ENCODE measurements at regions of chr1 and their contacts with region 1.

Region 1: DNA sequence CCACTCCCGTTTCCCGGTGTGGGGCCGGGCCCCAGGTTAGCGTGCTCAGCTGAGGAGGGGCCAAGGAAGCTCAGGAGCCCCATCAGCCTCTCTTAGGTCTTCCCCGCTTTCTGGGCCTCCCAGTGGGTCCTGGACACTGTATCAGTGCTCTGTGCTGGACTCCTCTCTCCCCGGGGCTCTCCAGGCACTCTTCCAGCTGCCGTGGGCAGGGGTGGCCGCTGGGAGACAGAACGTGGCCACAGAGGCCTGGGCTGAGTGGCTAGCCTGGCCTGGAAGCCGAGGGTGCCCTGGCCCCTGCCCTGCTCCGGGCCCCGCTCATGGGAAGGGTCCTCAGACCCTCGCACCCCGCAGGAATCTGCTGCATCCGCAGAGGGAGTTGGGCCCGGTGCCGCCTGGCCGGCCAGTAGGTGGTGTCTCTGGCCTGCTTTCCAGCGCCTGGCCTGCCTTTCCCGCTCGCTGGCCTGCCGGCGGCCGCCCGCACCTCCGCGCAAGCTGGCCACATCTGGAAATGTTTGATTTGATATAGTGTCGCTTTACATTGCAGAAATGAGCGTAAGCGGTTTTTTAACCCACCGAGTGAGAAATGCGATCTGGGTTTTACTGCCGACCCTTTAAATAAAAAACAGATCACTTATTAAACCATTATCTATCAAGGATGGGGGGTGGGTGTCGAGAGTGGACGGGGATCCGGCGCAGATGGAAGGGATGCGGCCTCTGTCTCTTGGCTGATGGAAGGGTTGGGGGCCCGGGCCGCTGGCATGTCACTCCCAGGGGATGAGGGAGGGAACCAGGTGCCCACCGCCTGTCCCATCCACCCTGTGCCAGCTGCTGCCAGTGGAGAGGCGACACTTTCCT is 74.4 kb upstream of the TTC34 start:
- DNase-seq: no peak
- H3K4me3 ChIP-seq: peak overlapping the region in 1 of 2 donors; percentile 52
- H3K27ac ChIP-seq: peak overlapping the region in 1 of 2 donors; percentile 60
- H3K4me1 ChIP-seq: peaks cover 0 to 12% of the 10 kb centered on the region in 2 donors
- H3K27me3 ChIP-seq: no peaks in the 10 kb centered on the region
- CTCF ChIP-seq: peak; percentile 73 to 84 (median 84)

Region 2: DNA sequence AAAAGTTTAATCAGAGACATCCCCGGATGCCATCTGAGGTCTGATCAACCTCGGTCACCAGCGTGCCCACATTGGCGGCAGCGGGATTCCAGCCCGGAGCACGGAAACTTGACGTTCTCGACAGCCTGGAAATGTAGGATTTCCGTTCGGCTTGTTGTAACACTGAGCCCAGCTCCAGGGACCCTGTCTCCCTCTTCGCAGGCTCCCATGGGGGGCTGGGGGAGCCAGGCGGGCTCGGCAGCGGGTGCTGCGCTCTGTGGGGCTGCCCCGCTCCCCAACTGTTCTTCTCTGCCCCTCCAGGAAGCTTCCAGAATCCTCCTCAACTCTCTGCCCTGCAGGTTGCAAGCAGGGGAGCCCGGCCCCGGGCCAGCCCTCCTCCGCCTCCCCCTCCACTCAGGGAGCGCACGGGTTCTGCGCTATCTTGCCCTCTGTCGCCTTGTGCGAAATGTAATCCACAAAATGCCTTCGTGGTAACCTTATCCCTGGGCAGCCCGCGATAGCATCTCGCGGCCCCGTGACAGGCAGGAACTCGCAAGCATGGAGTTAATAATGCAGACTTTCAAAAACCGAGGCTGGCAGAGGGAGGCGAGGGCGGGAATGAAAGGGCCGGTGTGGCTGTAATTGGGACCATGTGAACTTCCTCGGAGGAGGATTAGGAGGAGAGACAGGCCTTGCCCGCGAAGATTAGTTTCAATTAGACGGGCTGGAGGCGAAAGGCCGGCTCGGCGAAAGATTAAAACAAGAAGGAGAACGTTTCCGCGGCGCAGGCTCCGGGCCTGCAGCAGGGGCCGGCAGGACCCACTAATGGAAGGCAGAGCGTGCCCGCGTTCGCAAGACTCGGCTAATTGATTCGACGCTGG is 20.5 kb before region 1 on chr1:
- intact Hi-C with region 1: no loop called
- DNase-seq: no peak
- H3K4me3 ChIP-seq: no peak overlapping the region
- H3K27ac ChIP-seq: no peak overlapping the region
- H3K4me1 ChIP-seq: no peaks in the 10 kb centered on the region
- H3K27me3 ChIP-seq: no peaks in the 10 kb centered on the region
- CTCF ChIP-seq: no peak

Region 3: DNA sequence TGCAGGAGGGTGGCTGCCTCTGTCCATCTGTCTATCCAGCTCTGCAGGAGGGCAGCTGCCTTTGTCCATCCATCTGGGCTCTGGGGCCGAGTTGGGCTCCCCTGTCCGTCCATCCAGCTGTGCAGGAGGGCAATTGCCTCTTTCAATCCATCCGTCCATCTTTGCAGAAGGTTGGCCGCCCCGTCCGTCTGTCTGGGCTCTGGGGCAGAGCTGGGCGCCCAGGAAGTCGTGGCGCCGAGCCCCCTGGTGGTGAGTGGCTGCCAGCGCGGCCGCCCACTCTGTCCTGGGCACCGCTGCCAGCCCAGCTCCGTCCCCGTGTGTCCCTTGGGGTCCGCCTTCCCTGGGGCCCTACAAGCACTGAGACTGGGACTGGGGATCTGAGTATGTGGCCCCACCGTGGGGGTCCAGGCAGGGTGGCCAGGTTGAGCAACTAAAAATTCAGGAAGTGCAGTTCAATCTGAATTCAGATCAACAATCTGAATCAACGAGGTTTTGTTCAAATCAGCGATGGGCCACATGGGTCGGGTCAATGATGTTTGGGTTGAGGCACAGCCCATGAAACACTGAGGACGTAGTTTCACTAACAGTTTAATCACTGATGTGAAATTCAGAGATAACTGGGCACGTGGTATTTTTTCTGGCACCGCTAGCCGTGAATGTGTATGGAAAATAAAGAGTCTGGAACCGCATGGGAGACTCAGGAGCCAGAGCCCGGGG is 46.2 kb after region 1 on chr1:
- intact Hi-C with region 1: loop called (anchors 2 kb)
- DNase-seq: no peak
- H3K4me3 ChIP-seq: no peak overlapping the region
- H3K27ac ChIP-seq: peak overlapping the region in 1 of 2 donors; percentile 0
- H3K4me1 ChIP-seq: peaks cover 3 to 28% of the 10 kb centered on the region in 2 donors
- H3K27me3 ChIP-seq: no peaks in the 10 kb centered on the region
- CTCF ChIP-seq: peak; percentile 53 to 62 (median 56)

Region 4: DNA sequence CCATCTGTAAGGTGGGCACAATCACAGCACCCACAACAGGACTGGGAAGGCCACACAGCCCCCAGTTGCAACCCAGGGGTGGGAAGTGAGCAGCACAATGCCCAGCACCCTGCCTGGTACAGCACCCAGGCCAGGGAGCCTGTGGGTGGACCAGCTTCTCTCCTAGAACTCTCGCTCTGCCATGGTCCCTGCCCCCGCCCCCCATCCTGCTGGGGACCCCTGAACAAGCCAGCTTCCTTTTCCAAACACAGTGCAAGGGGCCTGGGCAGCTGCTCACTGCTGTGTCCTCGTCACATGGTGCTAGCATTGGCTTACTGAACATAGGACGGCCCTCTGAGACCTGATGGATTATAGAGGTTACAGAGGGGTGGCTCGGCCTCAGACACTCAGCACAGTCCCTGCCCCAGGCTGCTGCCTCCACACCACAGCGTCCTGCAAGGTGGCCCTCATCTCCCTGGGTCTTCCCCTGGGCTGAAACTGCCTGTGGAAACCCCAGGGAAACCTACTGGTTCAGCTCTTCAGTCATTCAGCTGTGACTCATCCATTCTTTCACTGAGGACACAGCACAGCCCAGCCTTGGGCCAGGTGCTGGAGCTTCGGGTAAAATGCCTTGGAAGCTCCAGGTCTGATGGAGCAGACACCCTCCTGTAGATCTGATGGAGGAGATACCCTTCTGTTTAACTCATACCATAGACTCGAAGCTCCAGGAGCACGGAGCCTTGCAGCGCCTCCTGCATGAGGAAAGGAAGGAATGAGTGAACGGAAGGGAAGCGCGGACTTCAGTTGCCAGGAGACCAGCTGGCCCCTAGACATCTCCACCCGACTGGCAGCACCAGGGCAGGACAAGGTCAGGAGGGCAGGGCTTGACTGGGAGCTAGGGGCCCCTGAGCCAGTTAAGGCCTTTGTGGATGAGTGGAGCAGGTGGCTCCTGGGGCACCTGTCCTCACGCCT is 184.9 kb after region 1 on chr1:
- intact Hi-C with region 1: loop called (anchors 2 kb)
- DNase-seq: peak in 1 of 2 donors; percentile 61
- H3K4me3 ChIP-seq: no peak overlapping the region
- H3K27ac ChIP-seq: no peak overlapping the region
- H3K4me1 ChIP-seq: peaks cover 2 to 30% of the 10 kb centered on the region in 2 donors
- H3K27me3 ChIP-seq: no peaks in the 10 kb centered on the region
- CTCF ChIP-seq: no peak

Region 5: DNA sequence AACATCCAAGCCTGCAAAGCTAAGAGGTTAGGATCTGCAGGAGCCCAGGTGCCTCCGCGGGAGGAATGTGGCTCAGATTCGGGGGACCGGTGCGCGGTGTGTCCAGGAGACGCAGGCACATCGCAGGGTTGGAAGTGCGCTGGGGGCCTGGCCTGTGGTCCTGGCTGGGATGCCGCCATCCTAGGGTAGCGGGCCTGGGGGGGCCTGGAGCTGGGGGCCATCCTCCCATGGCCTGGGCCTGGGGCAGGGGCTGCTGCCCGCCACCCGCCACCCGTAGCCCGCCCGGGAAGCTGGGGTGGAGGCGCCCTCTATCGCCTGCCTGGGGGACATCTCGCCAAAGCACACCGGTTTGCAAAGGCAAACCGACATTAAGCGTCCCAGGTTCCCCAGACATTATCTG is 407.9 kb after region 1 on chr1:
- intact Hi-C with region 1: loop called (anchors 10 kb)
- DNase-seq: no peak
- H3K4me3 ChIP-seq: peak overlapping the region in 1 of 2 donors; percentile 37
- H3K27ac ChIP-seq: peak overlapping the region; percentile 27 to 56
- H3K4me1 ChIP-seq: peaks cover 9 to 39% of the 10 kb centered on the region in 2 donors
- H3K27me3 ChIP-seq: no peaks in the 10 kb centered on the region
- CTCF ChIP-seq: peak; percentile 81 to 89 (median 88)

Region 6: DNA sequence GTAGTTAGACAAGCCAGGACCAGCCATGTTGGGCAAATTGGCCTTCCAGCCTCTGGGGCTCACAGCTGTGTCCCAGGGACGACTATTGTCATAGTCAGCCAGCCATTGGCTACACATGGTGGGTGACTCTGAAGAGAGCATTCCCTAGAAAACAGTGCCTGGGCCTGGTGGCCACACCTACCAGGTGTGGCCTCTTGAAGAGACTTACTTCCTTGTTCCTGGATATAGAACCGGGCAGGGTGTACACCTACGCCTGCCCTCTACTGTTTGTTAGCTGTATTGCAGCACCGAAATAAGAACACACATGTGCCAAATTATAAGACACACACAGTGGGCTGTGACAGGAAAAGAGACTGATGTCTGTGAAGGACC is 443.9 kb after region 1 on chr1:
- intact Hi-C with region 1: no loop called
- DNase-seq: no peak
- H3K4me3 ChIP-seq: no peak overlapping the region
- H3K27ac ChIP-seq: peak overlapping the region; percentile 15 to 51
- H3K4me1 ChIP-seq: peaks cover 10 to 63% of the 10 kb centered on the region in 2 donors
- H3K27me3 ChIP-seq: no peaks in the 10 kb centered on the region
- CTCF ChIP-seq: peak; percentile 57 to 75 (median 74)

Region 7: DNA sequence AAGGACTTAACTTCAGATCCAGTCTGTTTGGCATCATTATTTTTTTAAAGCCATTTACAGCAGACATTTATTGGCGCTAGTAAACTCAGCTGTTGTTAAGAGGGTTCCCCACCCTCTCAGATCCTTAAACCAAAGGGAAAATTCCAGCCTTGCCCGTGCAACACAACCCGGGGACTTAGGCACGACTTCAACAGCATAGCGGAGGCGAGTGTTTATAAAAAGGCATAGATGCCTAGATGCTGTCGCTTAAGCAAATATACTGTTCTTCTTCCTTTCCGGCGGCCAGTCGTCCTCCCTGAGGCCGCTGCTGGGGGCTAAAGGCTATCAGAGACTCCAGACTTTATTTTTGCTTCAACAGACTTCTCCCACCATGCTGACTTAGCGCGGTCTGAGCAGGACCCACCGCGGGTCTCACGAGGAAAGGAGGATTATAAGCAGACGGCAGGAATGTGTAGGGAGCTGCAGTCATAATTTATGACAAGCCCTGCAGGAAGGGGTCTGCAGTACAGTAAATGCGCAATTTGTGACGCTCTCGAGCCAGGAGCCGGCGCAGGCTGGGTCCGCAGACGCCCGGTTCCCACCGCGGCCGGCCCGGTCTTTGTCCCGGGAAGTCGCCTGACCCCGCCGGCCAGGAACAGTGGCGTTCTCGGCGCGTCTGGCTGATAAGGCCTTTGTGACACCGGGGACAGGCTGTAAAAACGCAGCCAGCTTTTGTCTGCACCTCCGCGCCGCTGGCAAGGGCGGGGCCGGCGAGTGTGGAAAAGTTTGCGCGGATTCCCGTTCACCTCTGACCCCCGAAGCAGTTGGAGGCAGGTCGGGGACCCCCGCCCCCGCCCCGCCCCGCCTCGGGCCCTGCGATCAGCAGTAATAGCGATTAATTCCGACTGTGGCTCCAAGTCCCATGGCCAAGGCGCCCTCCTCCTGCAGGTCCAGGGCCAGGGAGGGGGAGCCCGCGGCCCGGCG is 517.4 kb after region 1 on chr1:
- intact Hi-C with region 1: no loop called
- DNase-seq: no peak
- H3K4me3 ChIP-seq: peak overlapping the region; percentile 53 to 67
- H3K27ac ChIP-seq: peak overlapping the region; percentile 97 to 99
- H3K4me1 ChIP-seq: peaks cover 12 to 60% of the 10 kb centered on the region in 2 donors
- H3K27me3 ChIP-seq: no peaks in the 10 kb centered on the region
- CTCF ChIP-seq: no peak

Region 8: DNA sequence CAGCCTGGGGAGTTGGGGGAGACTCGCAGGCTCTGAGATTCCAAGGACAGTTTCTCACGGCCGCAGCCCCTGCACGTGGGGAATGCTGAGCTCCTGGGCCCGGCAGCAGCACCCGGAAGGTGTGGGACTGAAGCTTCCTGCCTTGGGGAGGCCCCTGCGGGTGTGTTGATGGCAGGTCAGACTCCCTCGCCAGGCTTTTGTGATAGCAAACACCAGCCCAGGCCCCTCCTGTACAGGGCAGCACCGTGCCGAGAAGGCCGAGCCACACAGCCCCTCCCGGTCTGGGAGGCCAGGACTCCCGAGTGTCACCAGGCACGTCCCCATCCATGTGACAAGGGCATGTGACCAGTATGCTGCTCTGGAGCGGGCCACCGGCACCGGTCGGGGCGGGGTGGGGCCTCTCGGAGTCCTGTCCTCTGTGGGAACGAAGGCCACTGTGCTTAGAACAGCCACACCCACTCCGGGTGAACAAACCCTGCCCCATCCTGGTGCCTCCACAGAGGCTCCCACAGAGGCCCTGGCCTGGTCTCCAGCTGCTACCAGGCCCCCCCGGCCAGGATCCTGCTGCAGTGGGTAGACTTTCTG is 547.4 kb after region 1 on chr1:
- intact Hi-C with region 1: loop called (anchors 2 kb)
- DNase-seq: peak; percentile 77 to 87
- H3K4me3 ChIP-seq: no peak overlapping the region
- H3K27ac ChIP-seq: peak overlapping the region; percentile 77 to 92
- H3K4me1 ChIP-seq: peaks cover 6 to 43% of the 10 kb centered on the region in 2 donors
- H3K27me3 ChIP-seq: no peaks in the 10 kb centered on the region
- CTCF ChIP-seq: no peak

Measured in ascending aorta (tissue), 2 donors.